BJ (cell line): ENCODE measurements at regions of chr7 and their contacts with region 1.

Region 1: DNA sequence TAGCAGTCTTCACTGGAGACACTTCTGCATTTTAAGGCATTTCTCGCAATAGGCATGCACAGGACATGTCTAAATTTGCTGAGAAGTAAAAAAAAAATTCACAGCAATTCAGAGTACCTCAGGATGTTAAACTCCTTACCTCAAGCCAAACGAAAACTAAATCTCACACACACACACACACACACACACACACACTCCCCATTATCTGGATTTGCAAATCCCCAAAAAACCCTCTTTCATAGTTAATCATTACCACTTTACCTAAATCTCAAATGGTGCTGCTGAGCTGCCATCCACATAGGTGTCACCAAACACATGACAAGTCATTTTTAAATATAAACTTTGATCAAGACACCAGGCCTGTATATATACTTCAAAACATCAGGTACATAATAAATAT is 31.8 kb downstream of the CACNA2D1 start:
- DNase-seq: no peak
- H3K4me3 ChIP-seq: no peak overlapping the region
- H3K27me3 ChIP-seq: no peaks in the 10 kb centered on the region
- CTCF ChIP-seq: no peak

Region 2: DNA sequence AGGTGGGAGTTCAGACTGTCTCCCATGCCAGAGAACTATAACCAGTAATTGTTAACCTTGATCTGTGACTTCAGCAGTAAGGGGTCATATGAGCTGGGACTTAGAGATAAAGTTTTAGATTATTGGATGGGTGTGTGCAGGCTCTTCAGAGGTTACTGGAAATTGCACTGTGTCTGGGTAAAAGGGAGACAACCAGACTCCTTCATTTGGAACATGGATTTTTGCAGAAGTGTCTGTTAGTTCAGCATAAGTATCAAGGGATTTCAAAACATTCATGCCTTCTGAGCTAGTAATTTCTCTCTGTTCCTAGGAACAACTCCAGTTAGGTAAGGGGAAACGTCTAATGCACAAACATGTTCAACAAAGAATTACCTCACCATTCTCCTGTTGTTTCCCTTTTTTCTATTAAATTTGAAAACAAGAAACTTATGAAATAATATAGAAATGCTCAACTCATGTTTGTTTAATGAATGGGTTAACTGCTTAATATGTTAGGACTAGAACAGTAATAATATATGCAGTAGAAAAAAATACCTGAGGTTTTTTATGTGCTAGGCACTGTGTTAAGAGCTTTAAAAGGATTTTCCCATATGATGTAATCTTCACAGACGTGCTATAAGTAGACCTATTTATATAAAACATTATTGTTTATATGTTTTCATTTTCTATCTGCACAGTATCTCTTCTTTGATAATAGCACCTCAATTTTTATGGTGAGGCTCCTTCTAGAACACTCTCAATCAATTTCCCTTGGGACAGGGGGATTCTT is 201.1 kb before region 1 on chr7:
- CTCF ChIA-PET with region 1: no interaction called
- POLR2A ChIA-PET with region 1: interaction called, 21 read pairs
- DNase-seq: no peak
- H3K4me3 ChIP-seq: no peak overlapping the region
- H3K27me3 ChIP-seq: no peaks in the 10 kb centered on the region
- CTCF ChIP-seq: no peak

Region 3: GRCh38 chr7:82275342-82275741 is 136.4 kb before region 1 on chr7:
- CTCF ChIA-PET with region 1: no interaction called
- POLR2A ChIA-PET with region 1: no interaction called
- DNase-seq: no peak
- H3K4me3 ChIP-seq: no peak overlapping the region
- H3K27me3 ChIP-seq: no peaks in the 10 kb centered on the region
- CTCF ChIP-seq: no peak

Region 4: DNA sequence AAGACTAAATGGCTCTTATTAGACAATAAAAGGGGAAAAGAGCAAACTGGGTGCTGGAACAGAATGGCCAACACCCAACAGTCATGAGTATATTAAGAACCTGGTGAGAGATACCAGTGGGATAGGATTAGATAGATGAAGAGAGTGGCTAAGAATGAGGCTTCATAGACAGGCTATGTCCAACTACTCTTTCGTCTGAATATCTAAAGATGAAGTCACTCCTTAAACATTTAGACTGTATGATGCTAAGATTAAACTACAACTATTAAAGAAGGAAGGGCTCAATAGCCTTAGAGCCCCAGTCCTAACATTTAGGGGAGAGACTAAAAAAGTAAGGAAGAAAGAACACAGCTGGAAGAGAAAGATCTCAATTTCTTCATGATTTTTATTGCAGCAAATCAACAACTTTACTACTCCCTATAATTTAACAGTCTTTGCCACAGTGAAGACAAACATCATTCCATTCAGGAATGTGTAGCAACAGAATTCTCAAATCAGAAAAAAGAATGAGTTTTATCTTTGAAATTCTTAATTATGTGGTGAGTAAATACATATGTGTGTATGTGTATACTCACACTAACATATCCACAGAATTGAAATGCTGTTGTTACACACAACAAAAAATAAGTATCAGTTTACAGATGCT is 13.7 kb before region 1 on chr7:
- CTCF ChIA-PET with region 1: no interaction called
- POLR2A ChIA-PET with region 1: no interaction called
- DNase-seq: no peak
- H3K4me3 ChIP-seq: no peak overlapping the region
- H3K27me3 ChIP-seq: no peaks in the 10 kb centered on the region
- CTCF ChIP-seq: no peak

Region 5: DNA sequence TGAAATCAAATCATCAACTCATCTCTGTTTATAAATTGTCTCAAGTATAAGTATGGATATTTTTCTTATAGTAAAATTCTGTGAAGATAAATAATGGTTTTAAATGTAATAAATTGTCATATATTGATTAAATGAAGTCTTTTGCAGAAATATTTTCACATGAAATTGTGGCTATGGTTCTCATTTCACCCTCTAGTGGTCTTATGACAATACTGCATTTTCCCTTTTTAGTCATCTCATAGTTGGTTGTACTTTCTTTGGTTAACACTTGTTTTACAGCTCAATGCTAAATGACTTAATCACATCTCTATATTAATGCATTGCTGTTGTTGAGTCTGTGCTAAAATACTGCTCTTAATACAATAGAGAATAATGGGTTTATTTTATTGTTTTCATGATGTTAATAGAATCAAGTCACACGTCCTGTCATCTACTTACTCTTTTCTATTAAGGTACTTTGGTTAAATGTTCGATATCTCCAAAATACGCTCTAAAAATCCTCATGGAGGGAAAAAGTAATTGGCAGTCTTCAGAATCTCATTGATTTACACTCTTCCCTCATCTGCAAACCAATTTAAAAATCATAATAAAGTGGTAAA is 69.9 kb after region 1 on chr7:
- CTCF ChIA-PET with region 1: no interaction called
- POLR2A ChIA-PET with region 1: no interaction called
- DNase-seq: no peak
- H3K4me3 ChIP-seq: no peak overlapping the region
- H3K27me3 ChIP-seq: no peaks in the 10 kb centered on the region
- CTCF ChIP-seq: peak; percentile 71